Transverse colon (tissue), 4 donors: ENCODE measurements at regions of chrX and their contacts with region 1.

Region 1: DNA sequence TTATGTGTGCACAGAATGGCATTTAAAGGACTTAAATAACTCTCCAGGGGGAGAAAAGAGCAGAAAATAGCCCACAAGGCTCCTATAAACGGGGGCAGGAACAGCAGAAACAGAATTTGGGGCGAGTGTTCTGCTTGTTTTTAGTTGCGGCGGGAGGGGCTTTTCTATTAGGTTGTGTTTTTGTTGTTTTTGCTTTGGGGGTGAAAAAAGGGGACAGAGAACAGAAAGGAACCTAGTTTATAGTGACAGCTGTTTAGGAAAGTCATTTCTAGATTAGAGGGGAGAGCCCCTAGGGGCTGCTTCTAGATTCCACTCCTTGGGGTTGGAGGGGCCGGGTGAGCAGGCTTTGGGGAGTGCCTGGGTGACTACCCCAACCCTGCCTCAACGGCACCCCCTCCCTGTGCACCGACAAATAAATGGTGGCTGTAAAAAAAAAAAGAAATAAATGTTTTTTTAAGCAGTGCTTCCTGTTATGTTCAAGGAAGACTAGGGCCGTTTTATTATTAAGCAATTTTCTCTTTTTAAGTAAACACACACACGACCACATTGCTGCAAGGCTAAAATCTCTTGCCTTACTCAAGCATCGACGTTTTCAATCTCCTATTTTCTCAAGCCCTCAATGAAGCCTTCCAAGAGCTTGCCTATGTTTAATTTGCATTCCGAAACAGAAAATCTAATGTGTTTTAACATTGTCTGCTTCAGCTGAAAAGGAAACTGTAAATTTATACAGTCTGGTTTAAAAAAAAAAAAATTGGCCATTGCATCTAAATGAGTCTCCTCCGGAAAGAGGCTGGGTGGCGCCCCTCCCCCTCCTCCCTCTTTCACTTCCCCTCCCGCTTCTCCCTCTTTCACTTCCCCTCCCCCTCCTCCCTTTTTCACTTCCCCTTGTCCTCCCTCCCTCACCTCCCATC is 123.3 kb upstream of the TBL1X start:
- DNase-seq: peak; percentile 81
- H3K4me3 ChIP-seq: peak overlapping the region in 2 of 4 donors; percentile 18 to 25
- H3K27ac ChIP-seq: peak overlapping the region; percentile 72 to 86 (median 85)
- H3K4me1 ChIP-seq: peaks cover 5 to 22% (median 17%) of the 10 kb centered on the region in 4 donors
- H3K27me3 ChIP-seq: no peaks in the 10 kb centered on the region
- CTCF ChIP-seq: no peak
- EP300 ChIP-seq: no peak
- POLR2A ChIP-seq: no peak

Region 2: DNA sequence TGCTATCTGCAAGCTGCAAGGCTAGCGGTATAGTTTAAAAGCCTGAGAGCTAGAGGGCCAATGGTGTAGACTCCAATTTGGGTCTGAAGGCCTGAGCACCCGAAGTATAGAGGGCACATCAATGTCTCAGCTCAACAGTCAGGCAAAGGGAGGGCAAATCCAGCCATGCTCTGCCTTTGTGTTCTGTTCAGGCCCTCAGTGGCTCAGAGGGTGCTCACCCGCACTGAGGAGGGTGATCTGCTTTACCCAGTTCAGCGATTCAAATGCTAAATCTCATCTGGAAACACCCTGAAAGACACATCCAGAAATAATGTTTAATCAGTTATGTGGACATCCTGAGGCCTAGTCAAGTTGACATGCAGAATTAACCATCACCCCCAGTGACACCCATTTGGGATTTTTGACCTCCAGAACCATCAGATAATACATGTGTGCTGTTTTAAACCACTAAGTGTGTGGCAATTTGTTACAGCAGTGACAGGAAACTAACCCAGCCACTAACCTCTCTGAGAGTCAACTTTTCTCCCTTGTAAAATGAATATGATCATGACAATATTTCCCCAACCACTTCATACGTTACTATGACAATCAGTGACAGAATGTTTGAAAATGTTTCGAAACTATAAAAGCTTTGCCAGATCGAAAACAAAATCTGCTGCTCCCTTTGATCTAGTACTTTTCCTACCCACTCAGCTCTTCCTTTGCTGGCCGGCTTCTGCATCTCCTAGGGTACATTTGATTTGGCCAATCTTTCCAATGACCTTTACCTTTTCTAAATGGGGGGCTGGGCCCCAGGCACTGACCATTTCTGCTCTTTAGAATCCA is 114.9 kb after region 1 on chrX:
- in situ Hi-C with region 1: loop called in 3 of 4 experiments (anchors 10 to 25 kb)
- intact Hi-C with region 1: no loop called
- DNase-seq: no peak
- H3K4me3 ChIP-seq: no peak overlapping the region
- H3K27ac ChIP-seq: no peak overlapping the region
- H3K4me1 ChIP-seq: no peaks in the 10 kb centered on the region
- H3K27me3 ChIP-seq: no peaks in the 10 kb centered on the region
- CTCF ChIP-seq: no peak
- EP300 ChIP-seq: no peak
- POLR2A ChIP-seq: no peak

Region 3: GRCh38 chrX:9464435-9465371 is 123.2 kb after region 1 on chrX and contains the start of gene TBL1X:
- in situ Hi-C with region 1: loop called in 3 of 4 experiments (anchors 10 to 25 kb)
- intact Hi-C with region 1: loop called (anchors 2 kb)
- DNase-seq: peak; percentile 59
- H3K4me3 ChIP-seq: peak within 1 kb of the TSS; percentile 56 to 81 (median 66)
- H3K27ac ChIP-seq: peak within 1 kb of the TSS; percentile 77 to 86 (median 85)
- H3K4me1 ChIP-seq: peaks cover 0 to 35% (median 15%) of the 10 kb centered on the region in 4 donors
- H3K27me3 ChIP-seq: no peaks in the 10 kb centered on the region
- CTCF ChIP-seq: no peak
- EP300 ChIP-seq: no peak
- POLR2A ChIP-seq: no peak
- total RNA-seq, gene TBL1X: 3.4 to 16.8 (median 13.0) TPM